ENCODE measurements at regions of chr11 and their contacts with region 1.

Region 1: DNA sequence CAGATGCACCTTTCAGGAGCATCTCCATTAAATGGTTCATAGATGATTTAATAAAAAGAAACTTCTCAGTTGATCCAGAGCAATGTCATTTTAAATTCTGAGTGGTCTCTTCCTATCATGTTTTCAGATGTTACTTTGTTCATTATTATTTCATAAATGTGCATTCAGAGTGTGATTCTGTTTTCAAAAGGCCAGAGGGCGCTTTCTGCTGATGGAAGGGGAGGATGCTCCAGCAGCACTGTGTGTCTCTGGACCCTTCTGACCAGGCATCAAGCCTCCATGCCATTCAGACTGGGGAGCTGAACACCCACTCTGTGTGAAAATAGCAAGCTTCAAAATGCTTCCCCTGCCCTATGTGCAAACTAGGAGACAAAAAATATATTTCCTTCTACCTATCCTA is 23.9 kb upstream of the CRTAM start:
- DNase-seq: peak; percentile 30
- H3K4me3 ChIP-seq: no peak overlapping the region
- H3K27ac ChIP-seq: no peak overlapping the region
- H3K4me1 ChIP-seq: no peaks in the 10 kb centered on the region; a peak in 2 of 4 replicates
- H3K27me3 ChIP-seq: no peaks in the 10 kb centered on the region
- CTCF ChIP-seq: peak; percentile 31; the same call in 1 of the 2 replicates
- EP300 ChIP-seq: no peak
- RAD21 ChIP-seq: peak; percentile 52

Region 2: DNA sequence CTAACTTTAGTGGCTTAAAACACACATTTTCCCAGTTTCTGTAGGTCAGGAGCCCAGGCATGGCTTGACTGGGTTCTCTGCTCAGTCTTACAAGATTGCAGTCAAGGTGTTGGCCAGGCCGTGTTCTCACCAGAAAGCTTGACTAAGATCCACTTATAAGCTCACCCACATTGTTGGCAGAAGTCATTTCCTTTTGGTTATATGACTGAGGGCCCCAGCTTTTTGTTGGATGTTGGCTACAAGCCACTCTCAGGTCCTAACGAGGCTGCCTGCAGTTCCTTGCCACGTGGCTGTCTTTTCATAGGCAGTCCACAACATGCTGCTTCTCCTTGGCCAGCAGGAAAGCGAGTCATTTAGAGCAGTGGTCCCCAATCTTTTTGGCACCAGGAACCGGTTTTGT is 55.4 kb before region 1 on chr11:
- CTCF ChIA-PET with region 1: no interaction called
- POLR2A ChIA-PET with region 1: no interaction called
- DNase-seq: no peak
- H3K4me3 ChIP-seq: no peak overlapping the region
- H3K27ac ChIP-seq: no peak overlapping the region
- H3K4me1 ChIP-seq: peaks cover 4 to 14% of the 10 kb centered on the region in 2 experiments; a peak in 2 of 4 replicates
- H3K27me3 ChIP-seq: no peaks in the 10 kb centered on the region
- CTCF ChIP-seq: no peak
- EP300 ChIP-seq: no peak
- RAD21 ChIP-seq: no peak

Region 3: DNA sequence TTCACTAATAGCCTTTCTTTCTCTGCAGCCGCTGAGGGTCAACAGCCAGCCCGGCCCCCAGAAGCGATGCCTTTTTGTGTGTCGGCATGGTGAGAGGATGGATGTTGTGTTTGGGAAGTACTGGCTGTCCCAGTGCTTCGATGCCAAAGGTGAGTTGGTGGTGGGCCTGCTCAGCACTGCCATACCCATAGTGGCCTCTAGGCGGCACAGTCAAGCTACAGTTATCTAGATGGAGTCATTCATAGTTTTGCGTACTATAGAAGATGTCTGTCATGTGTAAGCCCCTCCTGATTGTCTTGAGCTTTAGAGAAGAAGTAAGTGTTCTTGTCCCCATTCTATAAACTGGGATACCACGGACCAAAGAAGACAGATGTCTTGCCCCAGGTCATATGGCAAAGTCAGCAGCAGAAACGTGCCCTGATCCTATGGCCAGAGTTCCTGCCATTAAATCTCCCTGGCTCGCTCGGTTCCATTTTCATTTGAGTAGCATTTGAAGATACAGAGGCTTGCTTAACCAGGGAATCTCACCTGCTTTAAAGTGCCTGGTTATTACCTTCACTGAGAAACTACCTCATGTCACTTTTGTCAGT is 18.2 kb before region 1 on chr11:
- CTCF ChIA-PET with region 1: interaction called, 26 read pairs
- POLR2A ChIA-PET with region 1: no interaction called
- DNase-seq: peak; percentile 43
- H3K4me3 ChIP-seq: no peak overlapping the region
- H3K27ac ChIP-seq: no peak overlapping the region
- H3K4me1 ChIP-seq: peaks cover 0 to 8% of the 10 kb centered on the region in 2 experiments; a peak in 2 of 4 replicates
- H3K27me3 ChIP-seq: no peaks in the 10 kb centered on the region
- CTCF ChIP-seq: peak; percentile 81
- EP300 ChIP-seq: no peak
- RAD21 ChIP-seq: peak; percentile 63

Region 4: GRCh38 chr11:122803306-122803705 is 11.1 kb before region 1 on chr11:
- CTCF ChIA-PET with region 1: interaction called, 10 read pairs
- POLR2A ChIA-PET with region 1: no interaction called
- DNase-seq: no peak
- H3K4me3 ChIP-seq: no peak overlapping the region
- H3K27ac ChIP-seq: peak overlapping the region in 1 of 2 experiments; percentile 36; a peak in 1 of 4 replicates
- H3K4me1 ChIP-seq: peaks cover under 1 to 22% of the 10 kb centered on the region in 2 experiments
- H3K27me3 ChIP-seq: no peaks in the 10 kb centered on the region
- CTCF ChIP-seq: no peak
- EP300 ChIP-seq: no peak
- RAD21 ChIP-seq: no peak

Measured in SK-N-SH (cell line).